ENCODE measurements at regions of chr4 and their contacts with region 1.

Region 1: GRCh38 chr4:167622481-167623246 is 388.4 kb upstream of the SPOCK3 start:
- DNase-seq: peak; percentile 53
- CTCF ChIP-seq: peak; percentile 73

Region 2: GRCh38 chr4:166165829-166166420 is 1456.7 kb before region 1 on chr4:
- CTCF ChIA-PET with region 1: interaction called, 21 read pairs
- POLR2A ChIA-PET with region 1: no interaction called
- DNase-seq: peak; percentile 37
- CTCF ChIP-seq: peak; percentile 63

Region 3: GRCh38 chr4:167642250-167642649 is 19.6 kb after region 1 on chr4:
- CTCF ChIA-PET with region 1: interaction called, 10 read pairs
- POLR2A ChIA-PET with region 1: no interaction called
- DNase-seq: no peak
- CTCF ChIP-seq: no peak

Region 4: DNA sequence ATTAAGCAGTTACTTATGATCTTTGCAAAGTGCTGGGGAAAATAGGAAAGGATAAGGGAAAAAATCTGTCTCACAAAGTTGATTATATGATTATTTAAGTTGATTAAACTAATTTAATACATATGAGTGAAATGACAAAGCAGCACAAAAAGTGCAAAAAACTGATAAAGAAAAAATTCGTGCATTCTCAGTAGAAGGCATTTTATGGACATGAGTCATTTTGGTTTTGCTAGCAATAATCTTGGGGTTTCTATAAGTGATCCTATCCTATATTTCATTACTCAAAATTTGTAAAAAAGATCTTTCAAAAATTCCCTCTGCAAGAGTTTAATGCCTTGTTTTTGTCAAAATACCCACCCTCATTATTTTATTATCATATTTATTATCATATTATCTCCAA is 245.5 kb after region 1 on chr4:
- CTCF ChIA-PET with region 1: no interaction called
- POLR2A ChIA-PET with region 1: no interaction called
- DNase-seq: no peak
- CTCF ChIP-seq: no peak

Region 5: GRCh38 chr4:168612450-168613139 is 989.9 kb after region 1 on chr4:
- CTCF ChIA-PET with region 1: no interaction called
- POLR2A ChIA-PET with region 1: no interaction called
- DNase-seq: no peak
- CTCF ChIP-seq: no peak